K562 (cell line): ENCODE measurements at regions of chr6 and their contacts with region 1.

Region 1: GRCh38 chr6:164331026-164331425 is 916.5 kb downstream of the QKI start:
- DNase-seq: peak in 1 of 4 experiments; percentile 18
- ATAC-seq: peak; percentile 63
- H3K4me3 ChIP-seq: no peak overlapping the region
- H3K27ac ChIP-seq: no peak overlapping the region
- H3K4me1 ChIP-seq: no peaks in the 10 kb centered on the region; a peak in 1 of 5 replicates
- H3K27me3 ChIP-seq: no peaks in the 10 kb centered on the region
- CTCF ChIP-seq: no peak
- EP300 ChIP-seq: no peak
- POLR2A ChIP-seq: no peak
- RAD21 ChIP-seq: no peak

Region 2: GRCh38 chr6:164315376-164315775 is 15.7 kb before region 1 on chr6:
- CTCF ChIA-PET with region 1: no interaction called
- POLR2A ChIA-PET with region 1: no interaction called
- in situ Hi-C with region 1: no loop called
- intact Hi-C with region 1: no loop called
- DNase-seq: no peak
- ATAC-seq: no peak
- H3K4me3 ChIP-seq: no peak overlapping the region
- H3K27ac ChIP-seq: no peak overlapping the region
- H3K4me1 ChIP-seq: no peaks in the 10 kb centered on the region
- H3K27me3 ChIP-seq: no peaks in the 10 kb centered on the region
- CTCF ChIP-seq: no peak
- EP300 ChIP-seq: no peak
- POLR2A ChIP-seq: no peak
- RAD21 ChIP-seq: no peak

Region 3: DNA sequence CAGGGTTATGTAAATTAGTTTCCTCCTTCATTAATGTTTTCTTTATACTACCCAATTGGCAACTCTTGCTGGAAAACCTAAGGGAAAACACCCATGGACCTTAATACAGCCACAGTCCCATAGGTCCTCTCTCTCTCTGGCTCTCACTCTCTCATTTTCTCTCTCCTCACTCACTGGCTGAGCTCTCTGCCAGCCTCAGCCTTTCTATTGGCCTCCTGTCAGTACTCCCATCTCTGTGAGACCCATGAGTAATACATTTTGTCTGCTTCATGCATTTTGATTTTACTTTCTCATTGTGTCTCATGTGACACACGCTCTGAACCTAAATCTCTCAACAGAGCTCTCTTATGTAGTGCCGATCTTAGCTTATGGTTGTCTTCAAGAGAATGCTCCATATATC is 70.8 kb after region 1 on chr6:
- CTCF ChIA-PET with region 1: no interaction called
- POLR2A ChIA-PET with region 1: no interaction called
- in situ Hi-C with region 1: no loop called
- intact Hi-C with region 1: loop called (anchors 10 kb)
- DNase-seq: peak in 1 of 4 experiments; percentile 32
- ATAC-seq: peak; percentile 73
- H3K4me3 ChIP-seq: no peak overlapping the region
- H3K27ac ChIP-seq: no peak overlapping the region
- H3K4me1 ChIP-seq: no peaks in the 10 kb centered on the region; a peak in 2 of 5 replicates
- H3K27me3 ChIP-seq: no peaks in the 10 kb centered on the region
- CTCF ChIP-seq: no peak
- EP300 ChIP-seq: no peak
- POLR2A ChIP-seq: no peak
- RAD21 ChIP-seq: no peak